Colonic mucosa (tissue), 4 donors: ENCODE measurements at regions of chr3 and their contacts with region 1.

Region 1: DNA sequence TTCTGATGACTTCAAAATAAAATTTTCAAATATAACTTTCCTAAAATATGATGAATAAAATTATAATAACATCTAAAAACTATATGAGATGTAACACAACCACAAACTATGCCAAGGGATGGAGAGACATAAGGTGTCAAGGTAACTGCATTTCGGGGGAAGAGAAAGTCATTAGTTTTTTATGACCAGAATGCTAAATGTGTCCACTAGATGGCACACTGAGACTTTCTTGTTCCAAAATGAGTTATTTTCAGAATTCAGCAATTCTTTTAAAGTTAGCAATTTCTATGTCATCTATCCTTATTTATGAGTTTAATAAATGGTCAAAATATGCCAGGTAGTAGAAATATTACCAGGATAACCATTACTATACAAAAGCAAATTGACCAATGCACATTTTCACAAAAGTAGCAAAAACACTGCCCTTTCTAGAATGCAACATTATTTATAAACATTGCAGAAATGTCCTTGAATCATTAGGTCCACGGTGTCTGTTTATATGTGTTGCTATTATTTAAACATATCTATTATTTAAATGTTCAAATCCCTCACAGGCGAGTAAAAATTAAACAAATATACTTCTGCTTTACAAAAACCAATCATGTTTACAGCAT is 374.2 kb downstream of the PLCL2 start:
- DNase-seq: no peak
- H3K4me3 ChIP-seq: no peak overlapping the region
- H3K27ac ChIP-seq: no peak overlapping the region
- H3K4me1 ChIP-seq: no peaks in the 10 kb centered on the region
- H3K27me3 ChIP-seq: no peaks in the 10 kb centered on the region
- CTCF ChIP-seq: peak; percentile 71

Region 2: GRCh38 chr3:17412950-17413530 is 154.1 kb after region 1 on chr3:
- intact Hi-C with region 1: loop called (anchors 2 kb)
- DNase-seq: peak; percentile 22
- H3K4me3 ChIP-seq: no peak overlapping the region
- H3K27ac ChIP-seq: no peak overlapping the region
- H3K4me1 ChIP-seq: no peaks in the 10 kb centered on the region
- H3K27me3 ChIP-seq: no peaks in the 10 kb centered on the region
- CTCF ChIP-seq: peak; percentile 64